AG04449 (cell line): ENCODE measurements at regions of chr12 and their contacts with region 1.

Region 1: GRCh38 chr12:47534695-47535094 is 171.1 kb downstream of the RPAP3 start:
- DNase-seq: no peak
- H3K4me3 ChIP-seq: no peak overlapping the region
- CTCF ChIP-seq: no peak

Region 2: GRCh38 chr12:47547085-47547484 is 12.4 kb after region 1 on chr12:
- CTCF ChIA-PET with region 1: interaction called, 16 read pairs
- POLR2A ChIA-PET with region 1: no interaction called
- DNase-seq: peak; percentile 9
- H3K4me3 ChIP-seq: no peak overlapping the region
- CTCF ChIP-seq: peak; percentile 49

Region 3: GRCh38 chr12:47686645-47687240 is 152.0 kb after region 1 on chr12:
- CTCF ChIA-PET with region 1: no interaction called
- POLR2A ChIA-PET with region 1: no interaction called
- DNase-seq: peak; percentile 7
- H3K4me3 ChIP-seq: no peak overlapping the region
- CTCF ChIP-seq: peak; percentile 63